SK-N-SH (cell line): ENCODE measurements at regions of chr22 and their contacts with region 1.

Region 1: GRCh38 chr22:50276143-50276542 is 6.0 kb upstream of the MAPK11 start:
- DNase-seq: peak; percentile 79
- H3K4me3 ChIP-seq: no peak overlapping the region
- H3K27ac ChIP-seq: no peak overlapping the region
- H3K4me1 ChIP-seq: peaks cover 4 to 11% of the 10 kb centered on the region in 2 experiments; a peak in 2 of 4 replicates
- H3K27me3 ChIP-seq: no peaks in the 10 kb centered on the region
- CTCF ChIP-seq: peak; percentile 49
- EP300 ChIP-seq: no peak
- RAD21 ChIP-seq: peak; percentile 19; the same call in 1 of the 2 replicates

Region 2: GRCh38 chr22:49701380-49702067 is 574.6 kb before region 1 on chr22:
- CTCF ChIA-PET with region 1: no interaction called
- POLR2A ChIA-PET with region 1: no interaction called
- DNase-seq: no peak
- H3K4me3 ChIP-seq: no peak overlapping the region
- H3K27ac ChIP-seq: no peak overlapping the region
- H3K4me1 ChIP-seq: peaks cover 0 to 17% of the 10 kb centered on the region in 2 experiments; a peak in 1 of 4 replicates
- H3K27me3 ChIP-seq: no peaks in the 10 kb centered on the region
- CTCF ChIP-seq: peak; percentile 49
- EP300 ChIP-seq: no peak
- RAD21 ChIP-seq: no peak

Region 3: DNA sequence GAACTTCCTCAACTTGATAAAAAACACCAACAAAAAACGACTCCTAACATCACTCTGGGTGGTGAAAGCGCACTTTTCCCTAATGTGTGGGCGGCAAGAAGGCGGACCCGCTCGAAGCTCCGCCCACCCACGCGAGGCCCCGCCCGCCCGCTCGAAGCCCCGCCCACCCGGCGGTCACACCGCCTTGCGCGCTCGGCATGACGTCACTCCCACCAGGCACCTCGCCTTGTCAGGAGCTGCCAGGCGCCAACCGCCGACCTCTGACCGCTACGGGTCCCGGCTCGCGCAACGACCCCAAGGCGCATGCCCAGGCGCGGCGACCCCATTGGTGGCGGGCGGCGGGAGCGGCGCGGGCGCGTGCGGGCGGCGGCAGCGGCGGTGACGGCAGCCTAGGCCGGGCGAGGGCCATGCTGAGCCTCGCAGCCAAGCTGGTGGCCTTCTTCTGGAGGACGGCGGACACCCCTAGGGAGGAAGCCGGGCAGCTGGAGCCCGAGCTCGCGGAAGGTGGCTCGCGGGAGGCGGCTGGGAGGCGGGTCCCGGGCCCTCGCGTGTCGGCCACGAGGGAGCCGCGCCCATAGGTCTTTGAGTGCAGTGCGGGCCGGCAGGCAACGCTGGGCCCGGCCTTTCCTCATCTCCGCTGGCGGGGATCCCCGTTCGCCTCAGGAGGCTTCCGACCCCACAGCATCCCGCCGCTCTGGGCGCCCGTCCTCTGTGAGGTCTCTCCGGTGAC is 186.3 kb before region 1 on chr22 and contains the start of gene MOV10L1:
- CTCF ChIA-PET with region 1: no interaction called
- POLR2A ChIA-PET with region 1: no interaction called
- DNase-seq: peak; percentile 67
- H3K4me3 ChIP-seq: no peak within 1 kb of the TSS
- H3K27ac ChIP-seq: no peak within 1 kb of the TSS
- H3K4me1 ChIP-seq: peaks cover 0 to 8% of the 10 kb centered on the region in 2 experiments; a peak in 1 of 4 replicates
- H3K27me3 ChIP-seq: no peaks in the 10 kb centered on the region; the same call in 1 of the 2 replicates
- CTCF ChIP-seq: no peak
- EP300 ChIP-seq: no peak
- RAD21 ChIP-seq: no peak
- polyA plus RNA-seq, gene MOV10L1: 2.1 and 3.0 TPM in 2 replicates

Region 4: DNA sequence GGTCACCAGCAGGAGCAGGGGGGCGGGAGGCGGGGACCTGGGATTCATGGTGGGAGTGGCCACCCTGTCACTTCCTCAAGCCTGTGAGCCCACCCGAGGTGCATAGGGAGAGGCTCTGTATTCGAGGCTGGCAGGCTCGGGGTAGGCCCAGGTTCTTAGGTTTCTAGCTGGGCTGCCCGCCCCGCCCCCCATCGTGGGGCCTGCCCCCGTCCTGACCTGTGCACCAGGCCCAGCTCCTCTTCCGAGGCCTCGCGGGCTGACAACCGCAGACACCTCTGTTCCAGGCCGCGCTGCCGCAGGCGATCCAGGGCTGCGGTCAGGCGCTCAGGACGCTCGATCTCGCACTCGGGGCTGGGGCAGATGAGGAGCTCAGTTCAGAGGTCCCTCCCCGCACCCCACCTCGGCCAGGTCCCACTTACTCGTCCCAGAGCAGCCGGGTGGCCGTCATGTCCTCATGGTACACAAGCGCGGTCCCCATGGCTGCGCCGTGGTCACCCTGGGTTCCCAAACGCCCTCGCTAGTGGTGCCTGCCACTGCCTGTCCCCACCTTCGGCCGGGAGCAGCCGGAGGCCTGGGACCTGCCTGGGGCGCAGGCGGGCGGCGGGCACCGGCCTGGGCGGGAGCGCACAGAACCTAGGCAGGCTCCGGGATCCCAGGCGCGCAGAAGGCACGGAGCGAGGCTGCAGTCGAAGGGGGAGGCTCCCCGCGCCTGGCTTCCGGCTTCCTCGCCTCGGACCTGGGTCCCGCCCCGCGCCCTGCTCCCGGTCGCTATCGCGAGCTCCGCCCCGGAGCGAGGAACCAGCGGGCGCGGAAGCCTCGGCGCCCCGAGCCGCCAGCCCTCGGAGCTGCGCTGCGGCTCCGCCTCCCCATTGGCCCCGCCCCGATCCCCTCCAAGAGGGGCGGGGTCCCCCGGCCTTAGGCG is 25.3 kb before region 1 on chr22 and contains the start of gene HDAC10:
- CTCF ChIA-PET with region 1: interaction called, 72 read pairs
- POLR2A ChIA-PET with region 1: interaction called, 3 read pairs
- DNase-seq: peak; percentile 94
- H3K4me3 ChIP-seq: peak within 1 kb of the TSS; percentile 80 to 89
- H3K27ac ChIP-seq: peak within 1 kb of the TSS; percentile 62 to 86
- H3K4me1 ChIP-seq: peaks cover 6 to 54% of the 10 kb centered on the region in 2 experiments; a peak in 2 of 4 replicates
- H3K27me3 ChIP-seq: no peaks in the 10 kb centered on the region
- CTCF ChIP-seq: no peak
- EP300 ChIP-seq: no peak
- RAD21 ChIP-seq: no peak
- polyA plus RNA-seq, gene HDAC10: 51.9 and 55.1 TPM in 2 replicates

Region 5: DNA sequence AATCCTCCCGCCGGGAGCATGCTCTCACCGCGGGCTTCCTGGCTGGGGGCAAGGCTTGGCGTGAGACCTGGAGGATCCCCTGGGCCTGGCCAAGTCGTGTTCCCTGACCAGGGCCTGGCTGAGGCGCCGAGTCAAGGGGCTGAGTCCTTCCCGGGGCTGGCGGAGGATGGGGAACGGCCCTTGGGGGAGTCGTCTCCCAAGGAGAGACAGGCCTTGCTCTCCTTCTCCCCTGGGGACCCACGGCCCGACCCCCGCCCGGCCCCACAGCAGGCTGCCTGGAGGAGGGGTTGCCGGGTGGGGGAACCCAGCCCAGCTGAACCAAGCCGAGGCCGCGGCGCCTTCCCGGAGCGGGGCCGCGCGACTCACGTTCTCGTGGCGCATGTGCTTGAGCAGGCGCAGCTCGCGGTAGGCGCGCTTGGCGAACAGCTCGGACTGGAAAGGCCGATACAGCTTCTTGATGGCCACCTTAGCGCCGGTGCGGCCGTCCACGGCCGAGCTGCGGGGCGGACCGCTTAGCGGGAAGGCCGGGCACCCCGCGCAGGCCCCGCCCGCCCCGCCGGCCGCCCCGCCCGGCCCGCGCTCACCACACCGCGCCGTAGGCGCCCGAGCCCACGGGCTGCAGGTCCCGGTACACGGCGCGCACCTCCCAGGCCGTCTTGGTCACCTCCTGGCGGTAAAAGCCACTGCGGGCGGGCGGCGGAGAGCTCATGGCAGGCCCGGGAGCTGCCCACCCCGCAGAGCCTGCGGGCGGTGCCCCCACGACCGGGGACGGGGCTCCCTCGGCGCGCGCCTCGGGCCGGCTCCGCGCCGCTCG is 15.1 kb before region 1 on chr22:
- CTCF ChIA-PET with region 1: interaction called, 34 read pairs
- POLR2A ChIA-PET with region 1: no interaction called
- DNase-seq: peak; percentile 84
- H3K4me3 ChIP-seq: peak overlapping the region; percentile 67 to 72
- H3K27ac ChIP-seq: peak overlapping the region; percentile 26 to 81
- H3K4me1 ChIP-seq: peaks cover 14 to 25% of the 10 kb centered on the region in 2 experiments; a peak in 2 of 4 replicates
- H3K27me3 ChIP-seq: no peaks in the 10 kb centered on the region
- CTCF ChIP-seq: no peak
- EP300 ChIP-seq: no peak
- RAD21 ChIP-seq: no peak

Region 6: DNA sequence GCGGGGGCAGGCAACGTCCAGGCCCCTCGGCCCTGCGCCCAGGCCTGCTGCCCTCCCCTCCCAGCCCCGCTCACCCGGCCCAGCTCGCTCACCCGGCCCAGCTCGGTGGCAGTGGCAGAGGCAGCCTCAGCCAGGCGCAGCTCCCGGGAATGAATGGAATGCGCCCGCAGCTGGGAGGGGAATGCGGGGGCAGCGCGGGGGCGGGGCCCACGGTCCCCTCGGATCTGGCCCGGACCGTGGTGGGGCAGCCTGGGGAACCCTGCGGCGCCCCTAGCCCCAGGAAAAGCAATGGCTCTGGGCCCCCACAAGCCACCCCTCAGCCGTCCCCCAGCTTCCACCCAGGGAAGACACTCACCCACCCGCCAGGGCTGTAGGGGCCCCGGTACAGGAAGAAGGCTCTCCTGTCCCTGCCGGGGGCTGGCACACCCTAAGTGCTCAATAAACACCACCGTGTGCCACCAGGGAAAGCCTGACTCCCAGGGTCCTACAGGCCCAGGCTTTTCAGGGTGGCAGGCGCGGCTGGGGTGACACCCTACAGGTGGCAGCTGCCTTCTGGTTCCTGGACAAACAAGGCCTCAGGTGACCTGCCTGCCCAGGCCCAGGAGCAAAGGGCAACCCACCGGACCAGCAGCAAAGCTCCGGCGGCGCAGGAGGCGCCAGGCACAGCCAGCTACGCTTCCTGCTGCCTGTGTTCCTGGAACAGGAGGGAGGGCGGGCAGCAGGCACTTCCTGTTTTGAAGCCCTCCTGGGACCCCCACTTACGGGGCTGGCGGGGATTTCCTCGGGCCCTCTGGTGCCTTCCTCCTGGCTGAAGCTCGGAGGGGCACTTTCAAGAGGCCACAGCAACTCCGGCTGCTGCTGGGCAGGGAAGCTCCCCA is 17.5 kb after region 1 on chr22:
- CTCF ChIA-PET with region 1: interaction called, 12 read pairs
- POLR2A ChIA-PET with region 1: no interaction called
- DNase-seq: peak; percentile 60
- H3K4me3 ChIP-seq: peak overlapping the region; percentile 17 to 49; a peak in 2 of 4 replicates
- H3K27ac ChIP-seq: peak overlapping the region; percentile 63 to 80
- H3K4me1 ChIP-seq: peaks cover 6 to 22% of the 10 kb centered on the region in 2 experiments; a peak in 3 of 4 replicates
- H3K27me3 ChIP-seq: no peaks in the 10 kb centered on the region
- CTCF ChIP-seq: no peak
- EP300 ChIP-seq: peak in 1 of 2 experiments; percentile 57; a peak in 1 of 4 replicates
- RAD21 ChIP-seq: no peak

Region 7: DNA sequence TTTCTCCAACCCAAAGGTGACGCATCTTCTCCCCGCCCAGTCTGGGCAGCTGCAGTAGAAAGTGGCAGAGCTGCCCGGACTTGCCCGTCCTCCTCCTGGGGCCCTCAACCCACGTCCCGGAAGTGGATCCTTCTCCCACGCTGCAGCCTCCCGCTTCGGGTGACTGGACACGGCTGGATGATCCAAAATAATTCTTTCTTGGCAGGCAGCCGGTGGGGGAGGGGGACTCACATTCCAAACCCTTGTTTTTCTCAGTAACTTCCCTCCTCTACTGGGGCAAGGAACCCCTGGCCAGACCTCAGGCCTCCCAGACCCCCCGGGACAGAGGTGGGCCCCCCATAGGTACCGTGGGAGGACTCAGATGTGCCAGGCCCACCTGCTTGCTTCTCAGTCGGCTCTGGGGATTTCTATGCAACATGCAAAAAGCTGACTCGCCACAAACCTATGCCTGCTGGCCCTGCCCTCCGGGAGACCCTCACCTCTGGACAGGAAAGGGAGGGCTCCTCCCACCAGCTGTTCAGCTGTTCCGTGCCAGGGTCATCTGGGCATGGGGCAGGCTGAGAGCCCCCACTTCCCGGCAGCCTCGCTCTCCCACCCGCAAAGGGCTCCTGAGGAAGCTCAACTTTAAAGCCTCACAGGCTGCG is 29.9 kb after region 1 on chr22:
- CTCF ChIA-PET with region 1: interaction called, 19 read pairs
- POLR2A ChIA-PET with region 1: interaction called, 3 read pairs
- DNase-seq: peak; percentile 77
- H3K4me3 ChIP-seq: peak overlapping the region; percentile 95 to 98
- H3K27ac ChIP-seq: peak overlapping the region; percentile 95 to 97
- H3K4me1 ChIP-seq: peaks cover 46 to 63% of the 10 kb centered on the region in 2 experiments; a peak in 3 of 4 replicates
- H3K27me3 ChIP-seq: no peaks in the 10 kb centered on the region
- CTCF ChIP-seq: no peak
- EP300 ChIP-seq: peak in 1 of 2 experiments; percentile 65; a peak in 1 of 4 replicates
- RAD21 ChIP-seq: no peak

Region 8: GRCh38 chr22:50326959-50327710 is 51.0 kb after region 1 on chr22 and contains the start of gene DENND6B:
- CTCF ChIA-PET with region 1: interaction called, 101 read pairs
- POLR2A ChIA-PET with region 1: no interaction called
- DNase-seq: peak; percentile 97
- H3K4me3 ChIP-seq: peak within 1 kb of the TSS; percentile 59 to 75
- H3K27ac ChIP-seq: peak within 1 kb of the TSS; percentile 62 to 78
- H3K4me1 ChIP-seq: peaks cover 6 to 12% of the 10 kb centered on the region in 2 experiments; a peak in 2 of 4 replicates
- H3K27me3 ChIP-seq: no peaks in the 10 kb centered on the region
- CTCF ChIP-seq: peak; percentile 25; the same call in 1 of the 2 replicates
- EP300 ChIP-seq: 0 out of 4 replicates have a peak, but pooled peaks of 1 of the 2 experiments have one; percentile 6
- RAD21 ChIP-seq: peak; percentile 50; the same call in 1 of the 2 replicates
- polyA plus RNA-seq, gene DENND6B: 5.6 and 5.8 TPM in 2 replicates